ENCODE measurements at regions of chr5 and their contacts with region 1.

Region 1: GRCh38 chr5:180563994-180564393 is 27.3 kb downstream of the SCGB3A1 start:
- DNase-seq: no peak
- H3K4me3 ChIP-seq: no peak overlapping the region
- H3K27ac ChIP-seq: no peak overlapping the region
- H3K4me1 ChIP-seq: no peaks in the 10 kb centered on the region
- H3K27me3 ChIP-seq: no peaks in the 10 kb centered on the region
- CTCF ChIP-seq: no peak

Region 2: GRCh38 chr5:180486636-180487149 is 77.3 kb before region 1 on chr5:
- CTCF ChIA-PET with region 1: no interaction called
- dilution Hi-C with region 1: no loop called
- in situ Hi-C with region 1: no loop called
- intact Hi-C with region 1: no loop called
- DNase-seq: peak; percentile 13
- H3K4me3 ChIP-seq: no peak overlapping the region
- H3K27ac ChIP-seq: no peak overlapping the region
- H3K4me1 ChIP-seq: no peaks in the 10 kb centered on the region
- H3K27me3 ChIP-seq: no peaks in the 10 kb centered on the region
- CTCF ChIP-seq: no peak

Region 3: GRCh38 chr5:180499684-180500083 is 64.3 kb before region 1 on chr5:
- CTCF ChIA-PET with region 1: no interaction called
- dilution Hi-C with region 1: no loop called
- in situ Hi-C with region 1: no loop called
- intact Hi-C with region 1: no loop called
- DNase-seq: no peak
- H3K4me3 ChIP-seq: no peak overlapping the region
- H3K27ac ChIP-seq: no peak overlapping the region
- H3K4me1 ChIP-seq: peaks cover 24% of the 10 kb centered on the region
- H3K27me3 ChIP-seq: no peaks in the 10 kb centered on the region
- CTCF ChIP-seq: no peak

Region 4: GRCh38 chr5:180605554-180606214 is 41.7 kb after region 1 on chr5:
- CTCF ChIA-PET with region 1: no interaction called
- dilution Hi-C with region 1: no loop called
- in situ Hi-C with region 1: no loop called
- intact Hi-C with region 1: no loop called
- DNase-seq: peak; percentile 38
- H3K4me3 ChIP-seq: no peak overlapping the region
- H3K27ac ChIP-seq: no peak overlapping the region
- H3K4me1 ChIP-seq: no peaks in the 10 kb centered on the region
- H3K27me3 ChIP-seq: no peaks in the 10 kb centered on the region
- CTCF ChIP-seq: peak; percentile 81 to 82

Region 5: DNA sequence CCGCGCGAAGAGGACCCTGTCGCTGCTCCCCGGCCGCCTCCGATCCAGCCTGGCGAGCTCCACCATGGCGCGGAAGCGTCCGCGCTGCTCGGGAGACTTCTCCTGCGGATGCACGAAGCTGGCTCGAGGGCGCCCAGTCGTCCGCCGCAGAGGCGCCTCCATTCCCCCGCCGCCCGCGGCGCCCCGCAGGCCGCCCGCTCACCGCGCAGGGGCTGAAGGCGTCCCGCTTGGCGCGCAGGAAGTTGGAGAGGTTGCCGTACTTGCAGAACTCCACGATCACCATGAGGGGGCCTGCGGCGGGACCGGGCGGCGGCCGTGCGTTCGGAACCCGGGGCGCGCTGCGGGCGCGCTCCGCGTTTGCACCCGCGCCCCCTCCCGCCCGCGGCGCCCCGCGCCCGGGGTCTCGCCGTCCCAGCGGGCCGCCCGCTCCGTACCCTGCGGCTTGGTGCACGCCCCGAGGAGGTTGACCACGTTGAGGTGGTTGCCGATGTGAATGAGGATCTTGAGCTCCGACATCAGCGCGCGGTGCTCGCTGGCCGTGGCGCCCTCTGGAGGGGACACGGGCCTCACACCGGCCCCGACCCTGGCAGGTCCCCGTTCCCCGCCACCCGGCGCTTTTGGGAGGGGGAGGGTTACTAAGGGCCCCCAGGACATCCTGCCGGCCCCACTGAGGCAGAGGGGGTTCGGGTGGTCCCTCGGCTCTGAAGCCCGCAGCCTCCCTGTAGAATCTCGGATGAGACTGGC is 55.0 kb after region 1 on chr5:
- CTCF ChIA-PET with region 1: no interaction called
- dilution Hi-C with region 1: no loop called
- in situ Hi-C with region 1: no loop called
- intact Hi-C with region 1: no loop called
- DNase-seq: peak; percentile 28
- H3K4me3 ChIP-seq: peak overlapping the region in 1 of 3 experiments; percentile 32
- H3K27ac ChIP-seq: no peak overlapping the region
- H3K4me1 ChIP-seq: peaks cover 5% of the 10 kb centered on the region
- H3K27me3 ChIP-seq: peaks cover 4% of the 10 kb centered on the region
- CTCF ChIP-seq: no peak

Region 6: GRCh38 chr5:180648641-180649296 is 84.8 kb after region 1 on chr5:
- CTCF ChIA-PET with region 1: no interaction called
- dilution Hi-C with region 1: loop called (anchors 5 kb)
- in situ Hi-C with region 1: no loop called
- intact Hi-C with region 1: no loop called
- DNase-seq: no peak
- H3K4me3 ChIP-seq: no peak overlapping the region
- H3K27ac ChIP-seq: no peak overlapping the region
- H3K4me1 ChIP-seq: peaks cover 2% of the 10 kb centered on the region
- H3K27me3 ChIP-seq: peaks cover 31% of the 10 kb centered on the region
- CTCF ChIP-seq: no peak